AG04449 (cell line): ENCODE measurements at regions of chr1 and their contacts with region 1.

Region 1: DNA sequence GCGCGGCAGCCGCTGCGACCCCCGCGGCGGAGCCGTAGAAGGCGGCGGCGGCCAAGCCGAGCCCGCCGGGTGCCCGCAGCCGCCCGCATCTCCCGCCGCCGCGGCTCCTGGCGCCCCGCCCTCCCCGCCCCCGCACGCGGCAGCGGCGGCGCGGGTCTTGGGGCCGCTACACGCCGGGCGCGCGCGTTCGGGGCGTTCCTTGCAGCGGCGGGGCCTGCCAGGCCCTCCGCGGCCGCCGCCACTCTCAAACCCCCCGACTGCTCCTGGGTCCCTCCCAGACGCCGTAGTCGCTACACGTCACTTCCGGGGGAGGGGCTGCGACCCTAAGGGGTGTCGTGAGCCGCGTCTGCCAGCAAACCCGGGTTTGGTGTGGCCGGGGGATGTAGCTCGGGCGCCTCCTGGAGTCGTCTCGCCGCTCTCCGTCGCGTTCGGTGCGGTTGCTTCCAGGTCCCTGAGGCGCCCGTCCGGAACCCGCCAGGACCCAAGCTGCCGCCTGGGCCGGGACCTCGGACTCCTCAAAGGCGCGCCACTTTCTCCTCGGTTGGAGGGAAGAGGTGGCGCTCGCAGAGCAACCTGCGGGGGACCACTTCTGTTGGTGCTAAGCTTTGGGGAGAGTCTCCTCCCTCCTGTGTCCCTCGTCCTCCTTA is at the start of gene ELK4:
- DNase-seq: peak; percentile 85
- H3K4me3 ChIP-seq: peak within 1 kb of the TSS; percentile 74
- CTCF ChIP-seq: peak; percentile 78

Region 2: GRCh38 chr1:205610036-205610435 is 21.8 kb before region 1 on chr1:
- CTCF ChIA-PET with region 1: interaction called, 13 read pairs
- POLR2A ChIA-PET with region 1: no interaction called
- DNase-seq: no peak
- H3K4me3 ChIP-seq: no peak overlapping the region
- CTCF ChIP-seq: no peak

Region 3: DNA sequence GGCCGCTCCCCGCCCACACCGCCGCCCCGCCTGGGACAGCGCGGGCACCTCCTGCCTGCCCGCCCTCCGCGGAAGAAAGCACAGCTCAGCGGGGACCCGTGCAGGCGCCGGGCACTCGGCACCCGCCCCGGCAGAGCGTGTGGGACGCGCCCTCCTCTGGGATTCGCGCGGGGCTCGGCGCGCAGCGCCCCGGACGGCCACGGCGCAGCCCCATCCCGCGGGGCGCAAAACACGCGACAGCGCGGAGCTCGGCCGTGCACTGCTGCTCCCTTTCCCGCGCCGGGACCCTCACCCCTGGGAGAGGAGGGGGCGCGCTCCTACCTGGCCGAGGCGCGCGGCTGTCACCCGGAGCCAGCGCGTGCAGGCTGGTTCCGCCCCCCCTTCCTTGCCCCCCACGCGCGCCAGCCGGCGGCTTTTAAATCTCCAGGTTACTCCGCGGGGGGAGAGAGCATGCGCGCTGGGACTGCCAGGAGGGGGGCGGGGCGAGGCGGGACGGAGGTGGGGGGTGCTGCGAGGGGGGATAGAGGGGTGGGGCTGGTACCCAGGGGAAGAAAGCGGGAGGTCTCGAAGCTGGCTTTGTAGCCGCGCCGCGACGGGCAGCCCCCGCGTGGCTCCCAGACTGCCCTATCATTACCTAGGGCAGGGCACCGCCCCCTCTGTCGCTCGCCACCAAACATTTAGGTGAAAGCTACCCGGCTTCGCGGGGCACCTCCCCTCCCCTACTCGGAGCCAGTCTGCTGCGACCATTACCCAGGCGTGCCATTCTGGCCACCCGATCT is 48.4 kb after region 1 on chr1 and contains the start of gene SLC45A3:
- CTCF ChIA-PET with region 1: no interaction called
- POLR2A ChIA-PET with region 1: no interaction called
- DNase-seq: no peak
- H3K4me3 ChIP-seq: peak within 1 kb of the TSS; percentile 66
- CTCF ChIP-seq: no peak